WTC11 (cell line): ENCODE measurements at regions of chr12 and their contacts with region 1.

Region 1: DNA sequence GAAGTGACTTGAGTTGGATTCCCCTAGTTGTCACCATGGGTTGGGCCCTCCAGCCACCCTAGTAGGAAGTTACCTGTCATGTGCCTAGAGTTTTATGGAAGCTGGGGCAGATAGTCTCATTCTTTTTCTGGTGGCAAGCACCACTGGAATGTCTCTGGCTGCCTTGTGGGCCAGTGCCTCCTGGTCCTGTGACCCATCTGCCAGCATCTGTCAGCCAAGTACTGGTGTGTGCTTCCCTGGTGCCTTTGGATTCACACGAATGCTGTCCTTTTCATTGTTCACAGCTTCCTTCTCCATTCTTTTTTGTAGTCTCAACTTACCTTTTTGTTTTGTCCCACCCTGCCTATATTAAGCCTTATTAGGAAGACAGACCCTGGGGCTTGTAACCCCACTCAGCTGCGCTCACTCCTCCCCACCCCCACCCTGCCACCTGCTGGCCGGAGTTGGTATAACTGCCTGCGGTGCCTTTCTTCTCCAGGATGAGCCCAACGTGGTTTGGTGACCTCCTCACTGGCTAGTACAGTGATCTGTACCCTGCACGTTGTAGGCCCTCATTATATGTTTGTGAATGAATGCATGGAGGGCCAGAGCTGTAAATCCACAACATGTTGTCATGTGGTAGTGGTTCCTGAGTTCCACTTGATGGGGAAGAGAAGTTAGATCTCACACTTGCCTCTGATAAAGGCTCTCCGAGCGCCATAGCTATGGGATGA is 125.7 kb downstream of the TSPAN9 start:
- DNase-seq: peak; percentile 83
- ATAC-seq: peak; percentile 6; the same call in 1 of the 2 replicates
- H3K4me3 Mint-ChIP-seq: no peak overlapping the region
- H3K27ac Mint-ChIP-seq: no peak overlapping the region
- H3K4me1 Mint-ChIP-seq: peaks cover 40% of the 10 kb centered on the region
- H3K27me3 Mint-ChIP-seq: peaks cover 36% of the 10 kb centered on the region
- CTCF ChIP-seq: peak; percentile 92

Region 2: DNA sequence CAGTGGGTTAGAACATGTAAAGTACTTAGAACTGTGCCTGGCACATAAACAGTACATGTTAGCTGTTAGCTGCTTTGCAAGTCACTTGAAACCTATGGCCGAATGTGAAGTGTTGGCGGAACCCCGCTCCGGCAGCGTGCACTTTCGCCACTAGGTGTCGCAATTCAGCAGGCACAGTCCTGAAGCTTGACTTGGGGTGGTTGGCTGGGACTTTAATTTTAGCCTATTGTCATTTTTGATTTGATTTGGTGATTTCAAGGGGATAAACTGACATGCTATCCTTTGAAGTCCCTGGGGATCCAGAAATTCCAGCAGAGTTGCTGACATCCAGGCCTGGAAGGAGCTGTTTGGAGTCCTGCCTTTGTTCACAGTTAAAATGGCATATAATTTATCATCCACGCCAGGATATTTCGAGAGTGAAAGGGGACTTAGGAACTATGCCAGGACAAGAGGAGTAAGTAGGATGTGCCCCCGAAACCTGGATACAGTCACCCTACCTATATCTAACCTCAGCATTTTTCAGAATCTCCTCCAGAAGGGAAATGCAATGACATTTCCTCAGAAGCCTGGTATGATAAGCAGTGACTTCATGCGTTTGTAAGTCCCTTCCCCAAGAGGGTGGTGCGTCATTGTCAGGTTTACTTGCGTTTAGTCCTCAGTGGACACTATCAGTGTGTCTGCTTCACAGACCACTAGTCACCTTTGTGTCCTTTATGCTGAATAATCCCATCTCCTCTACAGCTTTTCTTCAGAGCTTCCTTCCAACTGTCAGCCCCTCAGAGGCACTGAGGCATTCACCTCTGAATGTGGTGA is 129.2 kb before region 1 on chr12:
- CTCF ChIA-PET with region 1: interaction called, 19 read pairs
- POLR2A ChIA-PET with region 1: no interaction called
- DNase-seq: peak; percentile 92
- ATAC-seq: peak; percentile 48
- H3K4me3 Mint-ChIP-seq: no peak overlapping the region
- H3K27ac Mint-ChIP-seq: no peak overlapping the region
- H3K4me1 Mint-ChIP-seq: peaks cover 8% of the 10 kb centered on the region
- H3K27me3 Mint-ChIP-seq: peaks cover 19% of the 10 kb centered on the region
- CTCF ChIP-seq: peak; percentile 90

Region 3: GRCh38 chr12:3150931-3151835 is 51.7 kb before region 1 on chr12:
- CTCF ChIA-PET with region 1: interaction called, 18 read pairs
- POLR2A ChIA-PET with region 1: no interaction called
- DNase-seq: peak; percentile 44
- ATAC-seq: peak; percentile 73
- H3K4me3 Mint-ChIP-seq: peak overlapping the region; percentile 15; the same call in 1 of the 2 replicates
- H3K27ac Mint-ChIP-seq: peak overlapping the region; percentile 88
- H3K4me1 Mint-ChIP-seq: peaks cover 67% of the 10 kb centered on the region
- H3K27me3 Mint-ChIP-seq: no peaks in the 10 kb centered on the region
- CTCF ChIP-seq: no peak

Region 4: DNA sequence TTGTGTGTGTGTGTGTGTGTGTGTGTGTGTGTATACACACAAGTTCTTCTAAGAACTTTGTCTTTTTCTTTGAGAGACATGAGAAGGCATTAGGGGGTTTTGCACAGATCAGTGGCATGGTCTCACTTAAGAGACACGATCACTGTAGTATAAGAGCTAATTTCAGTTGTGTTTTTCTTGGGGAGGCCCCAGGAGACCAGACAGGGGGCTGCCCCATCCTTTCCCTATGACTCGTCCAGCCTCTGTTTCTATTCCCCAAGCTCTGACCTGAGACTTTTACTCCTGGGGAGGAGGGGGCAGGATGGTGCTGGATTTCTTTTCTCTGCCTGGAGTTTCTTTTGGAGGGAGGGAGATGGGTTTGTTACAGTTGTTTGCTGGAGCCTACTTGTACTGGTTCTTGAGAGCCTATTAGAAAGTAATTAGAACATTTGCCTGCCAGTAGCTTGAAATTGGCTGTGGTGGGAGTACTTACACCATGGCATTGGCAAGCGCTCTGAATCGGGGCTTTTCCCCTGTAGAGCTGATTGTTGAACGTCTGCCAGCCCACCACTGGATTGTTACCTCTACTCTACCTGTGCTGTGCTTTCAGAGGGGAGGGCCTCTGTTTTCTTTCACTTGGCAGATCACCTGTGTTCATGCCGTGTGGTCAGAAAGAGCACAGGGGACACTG is 16.2 kb before region 1 on chr12:
- CTCF ChIA-PET with region 1: interaction called, 10 read pairs
- POLR2A ChIA-PET with region 1: no interaction called
- DNase-seq: no peak
- ATAC-seq: no peak
- H3K4me3 Mint-ChIP-seq: no peak overlapping the region
- H3K27ac Mint-ChIP-seq: no peak overlapping the region
- H3K4me1 Mint-ChIP-seq: peaks cover 28% of the 10 kb centered on the region
- H3K27me3 Mint-ChIP-seq: no peaks in the 10 kb centered on the region
- CTCF ChIP-seq: no peak

Region 5: GRCh38 chr12:3225154-3225795 is 22.4 kb after region 1 on chr12:
- CTCF ChIA-PET with region 1: interaction called, 11 read pairs
- POLR2A ChIA-PET with region 1: no interaction called
- DNase-seq: no peak
- ATAC-seq: no peak
- H3K4me3 Mint-ChIP-seq: no peak overlapping the region
- H3K27ac Mint-ChIP-seq: no peak overlapping the region
- H3K4me1 Mint-ChIP-seq: peaks cover 33% of the 10 kb centered on the region
- H3K27me3 Mint-ChIP-seq: no peaks in the 10 kb centered on the region
- CTCF ChIP-seq: no peak

Region 6: GRCh38 chr12:3249081-3249800 is 46.4 kb after region 1 on chr12:
- CTCF ChIA-PET with region 1: no interaction called
- POLR2A ChIA-PET with region 1: no interaction called
- DNase-seq: no peak
- ATAC-seq: no peak
- H3K4me3 Mint-ChIP-seq: no peak overlapping the region
- H3K27ac Mint-ChIP-seq: peak overlapping the region; percentile 64; the same call in 1 of the 2 replicates
- H3K4me1 Mint-ChIP-seq: peaks cover 16% of the 10 kb centered on the region
- H3K27me3 Mint-ChIP-seq: no peaks in the 10 kb centered on the region
- CTCF ChIP-seq: no peak

Region 7: DNA sequence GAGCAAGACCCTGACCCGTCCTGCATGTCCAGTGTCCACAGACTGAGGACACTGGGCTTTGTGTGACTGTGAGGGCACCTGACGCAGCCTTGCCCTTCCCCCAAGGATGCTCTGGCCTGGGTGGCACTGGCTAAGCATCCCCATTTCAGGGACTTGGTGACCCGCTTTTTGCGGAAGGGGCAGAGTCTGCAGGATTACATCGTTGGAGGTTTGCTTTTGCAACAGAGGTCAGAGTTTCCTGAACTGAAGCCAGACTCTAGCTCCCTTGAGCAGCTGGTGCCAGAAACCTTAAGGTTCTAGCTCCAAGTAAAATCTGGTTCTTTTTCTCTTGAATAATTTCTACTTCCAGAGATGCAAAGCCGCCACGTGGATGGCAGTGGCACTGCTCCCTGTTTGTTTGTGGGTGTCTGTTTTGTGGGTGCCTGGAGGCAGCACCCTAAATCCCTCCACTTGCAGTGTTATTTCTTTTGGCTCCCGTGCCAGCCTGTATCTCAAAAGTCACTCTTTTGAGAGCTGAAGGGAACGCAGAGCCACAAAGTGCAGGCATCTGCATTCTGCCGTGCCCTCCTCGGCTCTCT is 59.0 kb after region 1 on chr12:
- CTCF ChIA-PET with region 1: interaction called, 17 read pairs
- POLR2A ChIA-PET with region 1: no interaction called
- DNase-seq: no peak
- ATAC-seq: no peak
- H3K4me3 Mint-ChIP-seq: no peak overlapping the region
- H3K27ac Mint-ChIP-seq: peak overlapping the region; percentile 71; the same call in 1 of the 2 replicates
- H3K4me1 Mint-ChIP-seq: peaks cover 17% of the 10 kb centered on the region
- H3K27me3 Mint-ChIP-seq: no peaks in the 10 kb centered on the region
- CTCF ChIP-seq: no peak